ENCODE measurements at regions of chrX and their contacts with region 1.

Region 1: DNA sequence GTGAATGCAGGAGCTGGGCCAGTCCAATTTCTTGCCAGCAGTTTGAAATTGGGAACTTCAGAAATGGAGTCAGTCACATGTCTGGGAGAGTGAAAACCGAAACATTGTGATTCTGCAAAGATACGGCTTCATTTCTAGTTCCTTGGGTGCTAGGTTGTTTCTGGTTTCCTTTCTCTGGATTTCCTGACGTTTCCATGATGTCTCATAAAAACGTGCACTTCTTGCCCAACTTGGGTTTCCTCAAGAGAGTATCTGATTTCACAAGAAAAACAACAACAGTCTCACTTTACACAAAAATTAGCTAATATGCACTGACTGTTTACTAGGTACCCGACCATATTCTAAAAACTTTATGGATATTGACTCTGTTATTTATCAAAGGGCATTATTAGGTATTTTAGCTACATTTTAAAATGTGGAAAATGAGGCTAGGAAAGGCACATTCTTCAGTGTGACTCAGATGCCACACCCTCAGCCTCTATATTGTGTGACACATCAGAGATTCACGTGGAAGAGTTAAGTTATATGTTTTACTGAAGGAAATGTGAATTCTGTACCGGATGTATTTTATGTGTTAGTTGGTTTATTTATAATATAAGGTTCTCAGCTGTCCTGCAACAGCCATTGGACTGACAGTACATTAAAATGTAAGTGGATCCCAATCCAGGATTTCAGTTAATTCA is 225.0 kb upstream of the PUDP start:
- DNase-seq: peak; percentile 88
- H3K4me3 Mint-ChIP-seq: no peak overlapping the region
- H3K27ac Mint-ChIP-seq: peak overlapping the region; percentile 94
- H3K4me1 Mint-ChIP-seq: peaks cover 13% of the 10 kb centered on the region
- H3K27me3 Mint-ChIP-seq: no peaks in the 10 kb centered on the region
- CTCF ChIP-seq: no peak

Region 2: GRCh38 chrX:7159132-7159861 is 213.7 kb before region 1 on chrX:
- CTCF ChIA-PET with region 1: no interaction called
- POLR2A ChIA-PET with region 1: no interaction called
- intact Hi-C with region 1: loop called (anchors 5 kb)
- DNase-seq: peak; percentile 97
- H3K4me3 Mint-ChIP-seq: peak overlapping the region; percentile 56
- H3K27ac Mint-ChIP-seq: peak overlapping the region; percentile 82
- H3K4me1 Mint-ChIP-seq: peaks cover 15% of the 10 kb centered on the region
- H3K27me3 Mint-ChIP-seq: peaks cover 1% of the 10 kb centered on the region
- CTCF ChIP-seq: no peak

Region 3: DNA sequence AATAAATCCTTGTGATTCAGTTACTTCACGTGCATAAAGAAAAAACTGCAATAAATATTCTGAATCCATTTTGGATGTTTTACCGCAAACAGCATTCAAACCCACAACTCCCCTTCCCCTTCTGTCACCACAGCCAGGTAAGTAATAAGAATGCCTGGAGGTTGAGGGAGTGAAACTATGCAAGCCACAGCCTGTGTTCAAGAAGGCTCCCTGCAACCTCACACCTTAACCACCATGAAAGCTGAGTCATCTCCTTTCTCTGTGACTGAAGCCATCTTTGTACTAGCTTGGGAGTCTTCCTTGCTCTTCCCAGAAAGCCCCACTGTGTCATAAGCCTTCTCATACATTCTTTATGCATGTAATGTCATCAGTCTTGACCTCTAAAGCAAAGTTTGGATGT is 72.0 kb after region 1 on chrX:
- CTCF ChIA-PET with region 1: no interaction called
- POLR2A ChIA-PET with region 1: no interaction called
- intact Hi-C with region 1: loop called (anchors 2 kb)
- DNase-seq: peak; percentile 75
- H3K4me3 Mint-ChIP-seq: no peak overlapping the region
- H3K27ac Mint-ChIP-seq: no peak overlapping the region
- H3K4me1 Mint-ChIP-seq: peaks cover 24% of the 10 kb centered on the region
- H3K27me3 Mint-ChIP-seq: no peaks in the 10 kb centered on the region
- CTCF ChIP-seq: no peak

Region 4: GRCh38 chrX:7514871-7515599 is 142.1 kb after region 1 on chrX:
- CTCF ChIA-PET with region 1: no interaction called
- POLR2A ChIA-PET with region 1: no interaction called
- intact Hi-C with region 1: loop called (anchors 10 kb)
- DNase-seq: peak; percentile 84
- H3K4me3 Mint-ChIP-seq: no peak overlapping the region
- H3K27ac Mint-ChIP-seq: no peak overlapping the region
- H3K4me1 Mint-ChIP-seq: peaks cover 11% of the 10 kb centered on the region
- H3K27me3 Mint-ChIP-seq: no peaks in the 10 kb centered on the region
- CTCF ChIP-seq: no peak